MCF 10A (cell line): ENCODE measurements at regions of chr20 and their contacts with region 1.

Region 1: GRCh38 chr20:50379049-50379990 is 130.9 kb upstream of the PTPN1 start:
- DNase-seq: peak; percentile 91
- H3K4me3 Mint-ChIP-seq: no peak overlapping the region
- H3K27ac Mint-ChIP-seq: no peak overlapping the region
- H3K4me1 Mint-ChIP-seq: peaks cover 42% of the 10 kb centered on the region
- H3K27me3 Mint-ChIP-seq: no peaks in the 10 kb centered on the region
- CTCF ChIP-seq: no peak

Region 2: DNA sequence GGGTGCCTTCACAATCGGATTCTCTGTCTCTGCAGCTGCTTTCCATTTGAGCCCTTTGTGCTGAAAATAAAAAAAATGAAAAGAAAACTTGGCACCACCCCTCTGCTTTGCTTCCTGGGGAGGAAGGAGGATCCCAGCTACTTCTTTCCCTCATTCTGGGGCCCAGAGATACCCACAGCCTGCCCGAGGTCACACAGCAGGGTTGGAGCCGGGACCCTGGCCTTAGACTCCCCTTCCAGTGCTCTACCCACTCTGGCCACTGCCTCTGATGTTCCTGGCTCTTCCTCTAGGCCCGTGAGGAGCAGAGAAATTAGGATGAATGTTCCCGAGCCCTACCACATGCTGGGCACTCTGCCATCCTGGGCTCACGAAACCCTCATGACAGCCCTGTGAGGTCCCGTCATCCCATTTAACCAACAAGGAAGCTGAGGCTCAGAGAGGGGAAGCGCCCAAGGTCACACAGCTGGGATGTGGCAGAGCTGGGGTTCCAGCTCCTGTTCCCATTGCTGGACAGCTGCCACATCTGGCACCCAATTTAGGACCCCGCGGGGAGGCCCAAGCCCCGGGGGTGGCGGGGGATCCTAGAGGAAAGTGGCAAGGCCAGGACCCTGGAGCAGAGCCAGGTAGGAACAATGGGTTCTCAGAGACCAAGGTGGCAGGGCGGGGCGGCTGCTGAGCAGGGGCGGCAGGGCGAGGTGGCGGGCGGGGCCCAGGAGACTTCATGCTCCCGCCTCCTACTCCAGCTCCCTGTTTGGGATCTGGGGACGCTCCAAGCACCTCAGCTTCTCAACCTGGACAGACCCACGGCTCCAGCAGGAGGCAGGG is 112.1 kb before region 1 on chr20:
- CTCF ChIA-PET with region 1: interaction called, 3 read pairs
- POLR2A ChIA-PET with region 1: interaction called, 3 read pairs
- intact Hi-C with region 1: loop called (anchors 5 kb)
- DNase-seq: peak; percentile 91
- H3K4me3 Mint-ChIP-seq: no peak overlapping the region
- H3K27ac Mint-ChIP-seq: peak overlapping the region; percentile 69
- H3K4me1 Mint-ChIP-seq: peaks cover 21% of the 10 kb centered on the region
- H3K27me3 Mint-ChIP-seq: no peaks in the 10 kb centered on the region
- CTCF ChIP-seq: no peak

Region 3: DNA sequence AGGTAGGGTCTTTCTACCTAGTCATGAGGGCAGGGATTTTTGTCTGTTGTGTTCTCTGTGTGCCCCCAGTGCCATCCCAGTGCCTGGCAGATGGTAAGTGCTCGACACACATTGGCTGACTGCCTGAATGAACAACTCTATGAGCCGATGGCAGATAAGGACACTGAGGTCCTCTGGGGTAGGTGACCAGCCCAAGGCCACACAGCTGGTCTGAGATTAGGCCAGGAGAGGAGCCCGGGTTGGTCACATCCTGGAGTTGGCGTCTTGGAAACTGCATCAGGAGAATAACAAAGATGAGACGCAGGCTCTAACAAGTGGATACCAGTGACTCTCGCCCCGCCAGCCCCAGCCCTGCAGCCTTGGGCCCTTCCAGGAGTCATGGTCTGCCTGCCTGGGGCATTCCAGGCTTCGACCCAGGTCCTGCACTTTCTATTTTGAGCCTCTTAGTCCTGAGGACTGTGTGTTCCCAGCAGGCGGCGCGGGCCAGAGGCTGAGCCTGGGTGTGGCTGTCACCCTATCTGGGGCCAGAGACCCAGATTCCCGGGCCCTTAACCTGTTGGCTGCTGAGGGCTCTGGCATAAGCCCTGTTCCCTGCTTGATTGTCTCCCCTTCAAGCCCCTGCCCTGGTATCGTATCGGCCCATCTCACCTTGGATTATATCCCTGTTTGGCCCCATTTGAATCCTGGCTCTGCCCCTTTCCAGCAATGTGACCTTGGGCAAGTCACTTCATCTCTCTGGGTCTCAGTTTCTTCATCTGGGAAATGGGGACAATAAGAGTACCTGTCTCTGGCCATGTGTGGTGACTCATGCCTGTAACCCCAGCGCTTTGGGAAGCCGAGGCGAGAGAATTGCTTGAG is 100.4 kb before region 1 on chr20:
- CTCF ChIA-PET with region 1: no interaction called
- POLR2A ChIA-PET with region 1: no interaction called
- intact Hi-C with region 1: loop called (anchors 1 kb)
- DNase-seq: peak; percentile 70
- H3K4me3 Mint-ChIP-seq: no peak overlapping the region
- H3K27ac Mint-ChIP-seq: peak overlapping the region; percentile 23
- H3K4me1 Mint-ChIP-seq: peaks cover 22% of the 10 kb centered on the region
- H3K27me3 Mint-ChIP-seq: no peaks in the 10 kb centered on the region
- CTCF ChIP-seq: peak; percentile 39